ENCODE measurements at regions of chr2 and their contacts with region 1.

Region 1: DNA sequence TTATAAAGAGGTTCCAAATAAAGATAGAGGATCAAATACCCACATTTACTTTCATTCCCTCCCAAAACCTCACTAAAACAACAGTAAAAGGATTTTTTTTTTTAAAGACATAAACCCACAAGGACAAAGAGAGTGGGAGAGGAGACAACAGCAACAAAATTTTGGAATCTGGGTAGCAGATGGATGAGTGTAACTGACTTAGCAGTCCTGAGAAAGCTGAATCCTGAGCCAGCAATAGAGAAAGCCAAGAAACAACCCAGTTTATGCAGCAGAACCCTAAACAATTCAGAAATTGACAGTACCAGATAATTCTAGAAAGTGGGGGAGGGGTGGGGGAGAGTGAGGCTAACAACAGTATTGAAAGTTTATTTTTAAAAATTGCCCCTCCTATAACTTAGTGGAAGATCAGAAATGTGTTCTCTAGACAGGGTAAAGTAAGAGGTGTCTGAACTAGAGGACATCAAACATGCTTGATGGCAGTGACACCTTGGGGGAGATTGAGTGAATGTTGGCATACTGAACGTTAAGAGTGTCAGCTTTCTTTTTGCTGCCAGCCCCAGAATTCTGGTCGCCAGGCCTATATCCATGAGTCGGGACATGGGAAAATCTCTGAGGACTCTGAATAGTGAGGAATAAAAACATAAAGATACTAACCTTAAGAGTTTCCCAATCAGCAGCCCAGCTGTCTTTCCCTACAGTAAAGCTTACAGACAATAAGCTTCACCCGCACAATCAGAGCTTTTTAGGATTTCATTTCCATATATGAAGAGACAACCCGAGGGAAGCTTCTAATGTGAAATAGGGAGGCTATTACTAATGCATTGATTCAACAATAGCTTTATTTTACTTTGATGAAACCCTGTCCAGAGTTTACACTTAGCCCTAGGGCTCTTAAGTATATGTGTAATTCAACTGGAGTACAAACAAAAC is 128.0 kb upstream of the ALPP start:
- DNase-seq: no peak
- H3K4me3 ChIP-seq: no peak overlapping the region
- H3K27ac ChIP-seq: no peak overlapping the region
- H3K4me1 ChIP-seq: no peaks in the 10 kb centered on the region
- H3K27me3 ChIP-seq: no peaks in the 10 kb centered on the region
- CTCF ChIP-seq: no peak
- EP300 ChIP-seq: no peak
- POLR2A ChIP-seq: no peak

Region 2: GRCh38 chr2:231568785-231569435 is 681.6 kb before region 1 on chr2:
- intact Hi-C with region 1: no loop called
- DNase-seq: no peak
- H3K4me3 ChIP-seq: no peak overlapping the region
- H3K27ac ChIP-seq: no peak overlapping the region
- H3K4me1 ChIP-seq: no peaks in the 10 kb centered on the region
- H3K27me3 ChIP-seq: no peaks in the 10 kb centered on the region
- CTCF ChIP-seq: no peak
- EP300 ChIP-seq: no peak
- POLR2A ChIP-seq: no peak

Region 3: DNA sequence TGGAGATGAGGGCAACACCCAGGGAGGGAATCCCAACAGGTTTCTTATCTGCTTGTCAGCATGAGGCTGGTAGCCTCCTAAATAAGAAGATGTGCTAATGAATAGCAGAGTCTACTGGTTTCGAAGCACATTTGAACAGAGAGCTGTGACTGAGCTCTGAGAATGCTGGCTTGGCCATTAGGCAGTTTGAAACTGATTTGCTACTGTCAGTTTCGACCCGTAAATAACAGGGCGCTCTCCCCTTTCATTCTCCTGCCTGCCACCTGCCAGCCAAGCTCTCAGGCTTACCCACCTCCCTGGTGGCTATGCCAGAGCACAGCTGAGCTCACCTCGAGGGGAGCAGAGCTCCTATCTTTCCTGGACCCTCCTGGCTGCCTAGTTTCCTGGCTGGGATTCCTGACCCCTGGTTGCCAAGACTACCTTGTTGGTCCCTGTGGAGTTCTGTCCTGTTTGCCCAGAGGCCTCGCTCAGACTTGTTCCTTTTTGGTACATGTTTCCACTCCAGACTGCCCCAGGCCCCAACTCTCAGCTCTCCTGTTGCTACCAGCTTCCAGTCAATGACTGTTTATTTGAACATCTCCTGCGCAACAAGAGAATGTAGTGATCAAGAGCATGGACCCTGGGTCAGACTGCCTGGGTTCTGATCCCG is 25.7 kb after region 1 on chr2:
- intact Hi-C with region 1: loop called in 1 of 4 experiments (anchors 1 kb)
- DNase-seq: no peak
- H3K4me3 ChIP-seq: no peak overlapping the region
- H3K27ac ChIP-seq: no peak overlapping the region
- H3K4me1 ChIP-seq: no peaks in the 10 kb centered on the region
- H3K27me3 ChIP-seq: no peaks in the 10 kb centered on the region
- CTCF ChIP-seq: no peak
- EP300 ChIP-seq: no peak
- POLR2A ChIP-seq: no peak

Region 4: DNA sequence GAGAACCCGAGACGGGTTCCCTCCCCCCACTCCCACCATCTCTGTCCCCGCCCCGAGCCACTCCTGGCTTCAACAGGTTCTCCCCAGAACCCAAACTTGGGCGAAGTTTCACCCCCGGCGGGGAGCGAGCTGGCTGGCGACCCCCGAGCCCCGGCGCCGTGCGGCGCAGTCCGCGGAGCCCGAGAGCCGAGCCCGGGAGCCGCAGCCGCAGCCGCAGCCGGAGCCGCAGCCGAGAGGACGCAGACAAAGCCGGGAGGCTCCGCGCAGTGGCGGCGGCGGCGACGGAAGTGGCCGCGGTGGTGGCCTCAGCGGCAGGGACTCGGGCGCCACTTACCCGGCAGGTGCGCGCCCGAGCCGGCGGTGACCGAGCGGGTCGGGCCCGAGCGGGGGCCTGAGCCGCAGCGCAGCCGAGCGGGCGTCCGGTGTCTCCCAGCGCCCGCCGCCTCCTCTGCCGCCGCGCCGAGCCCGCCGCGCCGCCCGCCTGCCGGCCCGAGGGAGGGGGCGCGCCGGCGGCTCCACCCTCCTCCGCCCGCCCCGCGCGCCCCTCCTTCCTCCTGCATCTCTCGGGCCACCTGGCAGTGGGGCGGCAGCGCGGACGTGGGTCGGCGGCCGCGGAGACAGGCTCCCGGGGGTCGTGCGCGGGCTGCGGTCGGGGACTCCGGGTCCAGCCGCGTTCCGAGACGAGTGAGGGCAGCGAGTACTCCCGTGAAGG is 237.0 kb after region 1 on chr2 and contains the start of gene ECEL1:
- intact Hi-C with region 1: no loop called
- DNase-seq: peak in 4 of 5 donors; percentile 42 to 57 (median 46)
- H3K4me3 ChIP-seq: peak within 1 kb of the TSS; percentile 7
- H3K27ac ChIP-seq: peak within 1 kb of the TSS in 1 of 2 donors; percentile 19
- H3K4me1 ChIP-seq: no peaks in the 10 kb centered on the region
- H3K27me3 ChIP-seq: no peaks in the 10 kb centered on the region
- CTCF ChIP-seq: no peak
- EP300 ChIP-seq: no peak
- POLR2A ChIP-seq: peak; percentile 33
- total RNA-seq, gene ECEL1: 34.8 to 251 (median 48.8) TPM

Measured in ovary (tissue), 10 donors.